Activated CD8-positive, alpha-beta T cell treated with anti-CD3 and anti-CD28 coated beads, Interleukin-2, amount 10 ng/mL, durations not matched to agents 7 days and 5 days (primary cell): ENCODE measurements at regions of chr4 and their contacts with region 1.

Region 1: DNA sequence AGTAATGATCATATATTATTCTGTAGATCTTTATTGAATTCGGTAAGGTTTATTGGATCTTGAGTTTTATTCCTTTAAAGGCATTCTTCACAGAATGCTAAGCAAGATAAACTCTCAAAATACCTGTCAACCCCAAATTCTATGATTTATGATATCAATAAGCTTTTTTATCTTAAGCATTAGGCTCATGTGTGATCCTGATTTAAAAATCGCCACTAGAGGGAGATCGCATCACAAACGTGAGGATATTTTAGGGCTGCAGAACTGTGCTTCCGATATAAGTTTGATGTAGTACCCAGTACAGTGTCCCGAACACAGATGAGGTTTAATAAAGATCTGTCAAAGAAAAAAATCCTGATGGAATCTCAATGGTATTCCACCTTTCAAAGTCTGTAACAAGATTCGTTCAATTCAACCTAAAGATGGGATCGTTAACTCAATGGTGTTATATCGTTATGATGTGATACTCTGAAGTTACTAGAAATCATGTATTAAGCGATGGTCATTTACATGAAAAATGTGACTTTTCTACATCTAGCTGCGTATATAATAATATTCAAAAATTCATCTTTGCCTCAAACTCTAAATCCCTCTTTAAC is 169.0 kb downstream of the CORIN start:
- DNase-seq: peak; percentile 38
- ATAC-seq: peak; percentile 65
- H3K4me3 Mint-ChIP-seq: no peak overlapping the region
- H3K27ac Mint-ChIP-seq: no peak overlapping the region
- H3K4me1 Mint-ChIP-seq: no peaks in the 10 kb centered on the region
- H3K27me3 Mint-ChIP-seq: peaks cover 17% of the 10 kb centered on the region

Region 2: DNA sequence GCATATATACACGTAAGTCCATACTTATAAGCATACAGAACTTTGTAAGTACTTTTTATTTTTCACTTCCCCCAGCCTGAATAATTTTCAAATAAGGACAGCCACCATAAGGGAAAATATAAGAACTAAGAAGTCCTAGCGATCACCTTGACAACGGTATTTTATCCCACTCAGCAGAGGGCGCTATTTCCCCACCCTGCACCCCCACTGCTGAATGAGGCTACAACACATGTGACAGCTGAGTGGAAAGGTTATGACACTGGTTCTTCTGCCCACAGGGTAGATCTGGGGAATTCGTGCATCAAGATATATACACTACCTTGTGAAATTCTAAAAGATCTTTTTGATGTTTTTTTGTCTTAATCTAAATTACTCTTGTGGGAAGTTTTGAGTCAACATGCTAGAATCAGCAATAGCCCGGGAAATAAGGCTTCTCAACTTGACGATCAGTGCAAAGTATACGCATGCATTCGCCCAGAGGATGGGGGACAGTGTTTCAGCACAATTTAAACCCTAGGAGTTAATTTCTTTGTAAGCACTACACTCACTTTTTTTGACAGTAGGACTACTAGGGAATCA is 17.5 kb after region 1 on chr4:
- CTCF ChIA-PET with region 1: interaction called, 17 read pairs
- POLR2A ChIA-PET with region 1: no interaction called
- DNase-seq: peak; percentile 77
- ATAC-seq: peak; percentile 77
- H3K4me3 Mint-ChIP-seq: no peak overlapping the region
- H3K27ac Mint-ChIP-seq: no peak overlapping the region
- H3K4me1 Mint-ChIP-seq: no peaks in the 10 kb centered on the region
- H3K27me3 Mint-ChIP-seq: peaks cover 12% of the 10 kb centered on the region

Region 3: DNA sequence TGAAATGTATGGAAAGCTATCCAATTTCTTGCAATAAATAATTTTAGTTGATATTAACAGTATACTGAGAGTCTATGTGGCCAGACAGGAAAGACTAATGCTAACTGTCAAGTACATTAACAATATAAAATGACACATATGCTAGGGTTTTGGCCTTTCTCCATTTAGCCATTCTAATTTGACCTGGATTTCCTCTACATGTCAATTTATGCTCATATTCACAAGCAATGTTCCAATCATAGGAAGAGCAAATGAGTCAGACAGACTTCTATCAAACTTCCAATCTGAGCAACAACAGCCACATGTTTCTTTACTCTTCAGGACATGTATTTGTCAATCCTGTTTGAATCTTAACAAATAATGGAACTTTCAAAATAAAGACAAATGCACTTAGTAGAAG is 115.3 kb after region 1 on chr4:
- CTCF ChIA-PET with region 1: no interaction called
- POLR2A ChIA-PET with region 1: no interaction called
- DNase-seq: no peak
- ATAC-seq: no peak
- H3K4me3 Mint-ChIP-seq: no peak overlapping the region
- H3K27ac Mint-ChIP-seq: no peak overlapping the region
- H3K4me1 Mint-ChIP-seq: peaks cover 3% of the 10 kb centered on the region
- H3K27me3 Mint-ChIP-seq: peaks cover 21% of the 10 kb centered on the region